CD8-positive, alpha-beta T cell (primary cell): ENCODE measurements at regions of chr5 and their contacts with region 1.

Region 1: DNA sequence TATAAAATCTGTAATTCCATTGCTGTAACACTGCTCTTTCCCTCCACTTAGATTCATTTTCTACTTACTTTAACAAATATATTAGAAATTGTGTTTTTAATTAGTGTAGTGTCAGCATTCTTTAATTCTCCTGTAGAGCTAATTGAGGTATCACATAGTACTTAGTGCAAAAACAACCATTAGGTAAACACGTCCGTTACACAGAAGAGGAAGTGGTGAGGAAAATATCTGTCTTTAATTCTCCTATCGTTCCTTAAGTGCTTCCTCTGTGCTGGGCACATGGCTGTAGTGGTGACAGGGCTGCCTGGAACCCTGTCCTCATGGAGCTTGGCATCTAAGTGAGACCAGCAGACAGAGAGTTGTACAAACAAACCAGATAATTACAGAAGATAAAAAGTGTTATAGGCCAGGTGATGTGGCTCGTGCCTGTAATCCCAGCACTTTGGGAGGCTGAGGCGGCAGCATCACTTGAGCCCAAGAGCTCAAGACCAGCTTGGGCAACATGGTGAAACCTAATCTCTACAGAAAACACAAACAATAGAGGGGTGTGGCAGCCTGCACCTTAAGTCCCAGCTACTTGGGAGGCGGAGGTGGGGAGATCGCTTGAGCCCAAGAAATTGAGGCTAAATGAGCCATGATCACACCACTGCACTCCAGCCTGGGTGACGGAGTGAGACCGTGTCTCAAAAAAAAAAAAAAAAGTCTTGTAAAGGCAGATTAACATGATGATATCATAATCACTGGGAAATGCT is 36.4 kb downstream of the PARP8 start:
- DNase-seq: peak in 1 of 9 experiments; percentile 42
- ATAC-seq: peak; percentile 62
- H3K4me3 ChIP-seq: no peak overlapping the region
- H3K4me3 Mint-ChIP-seq: peak overlapping the region; percentile 59
- H3K27ac ChIP-seq: peak overlapping the region in 1 of 2 experiments; percentile 51
- H3K27ac Mint-ChIP-seq: peak overlapping the region; percentile 95
- H3K4me1 ChIP-seq: peaks cover 55% of the 10 kb centered on the region
- H3K4me1 Mint-ChIP-seq: peaks cover 82% of the 10 kb centered on the region
- H3K27me3 ChIP-seq: no peaks in the 10 kb centered on the region
- H3K27me3 Mint-ChIP-seq: no peaks in the 10 kb centered on the region
- CTCF ChIP-seq: no peak

Region 2: DNA sequence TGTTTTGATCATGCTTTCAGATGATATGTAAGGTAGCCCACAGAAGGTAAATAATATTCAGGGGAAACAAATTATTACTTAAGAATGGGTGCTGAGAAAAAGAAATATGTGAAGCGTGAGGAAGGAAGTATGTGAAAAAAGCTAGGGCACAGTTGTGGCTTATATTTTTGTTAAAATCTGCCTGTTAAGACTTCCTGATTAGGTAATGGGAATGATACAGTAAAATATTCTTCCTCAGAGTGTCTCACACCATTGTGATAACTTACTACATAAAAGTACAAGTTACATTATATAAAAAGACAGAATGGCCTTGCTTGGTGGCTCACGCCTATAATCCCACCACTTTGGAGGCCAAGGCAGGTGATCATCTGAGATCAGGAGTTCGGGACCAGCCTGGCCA is 55.1 kb before region 1 on chr5:
- CTCF ChIA-PET with region 1: no interaction called
- POLR2A ChIA-PET with region 1: no interaction called
- intact Hi-C with region 1: no loop called
- DNase-seq: no peak
- ATAC-seq: no peak
- H3K4me3 ChIP-seq: no peak overlapping the region
- H3K4me3 Mint-ChIP-seq: no peak overlapping the region
- H3K27ac ChIP-seq: no peak overlapping the region
- H3K27ac Mint-ChIP-seq: peak overlapping the region; percentile 5
- H3K4me1 ChIP-seq: peaks cover 12% of the 10 kb centered on the region
- H3K4me1 Mint-ChIP-seq: peaks cover 28% of the 10 kb centered on the region
- H3K27me3 ChIP-seq: no peaks in the 10 kb centered on the region
- H3K27me3 Mint-ChIP-seq: no peaks in the 10 kb centered on the region
- CTCF ChIP-seq: no peak

Region 3: GRCh38 chr5:50691399-50692016 is 11.3 kb before region 1 on chr5:
- CTCF ChIA-PET with region 1: interaction called, 3 read pairs
- POLR2A ChIA-PET with region 1: interaction called, 3 read pairs
- intact Hi-C with region 1: loop called in 1 of 2 experiments (anchors 2 kb)
- DNase-seq: no peak
- ATAC-seq: no peak
- H3K4me3 ChIP-seq: no peak overlapping the region
- H3K4me3 Mint-ChIP-seq: no peak overlapping the region
- H3K27ac ChIP-seq: peak overlapping the region in 1 of 2 experiments; percentile 42
- H3K27ac Mint-ChIP-seq: no peak overlapping the region
- H3K4me1 ChIP-seq: peaks cover 30% of the 10 kb centered on the region
- H3K4me1 Mint-ChIP-seq: peaks cover 43% of the 10 kb centered on the region
- H3K27me3 ChIP-seq: no peaks in the 10 kb centered on the region
- H3K27me3 Mint-ChIP-seq: no peaks in the 10 kb centered on the region
- CTCF ChIP-seq: no peak

Region 4: GRCh38 chr5:50923768-50924494 is 221.1 kb after region 1 on chr5:
- CTCF ChIA-PET with region 1: no interaction called
- POLR2A ChIA-PET with region 1: no interaction called
- intact Hi-C with region 1: no loop called
- DNase-seq: no peak
- ATAC-seq: no peak
- H3K4me3 ChIP-seq: no peak overlapping the region
- H3K4me3 Mint-ChIP-seq: no peak overlapping the region
- H3K27ac ChIP-seq: no peak overlapping the region
- H3K27ac Mint-ChIP-seq: no peak overlapping the region
- H3K4me1 ChIP-seq: no peaks in the 10 kb centered on the region
- H3K4me1 Mint-ChIP-seq: no peaks in the 10 kb centered on the region
- H3K27me3 ChIP-seq: peaks cover 0 to 3% of the 10 kb centered on the region in 2 experiments
- H3K27me3 Mint-ChIP-seq: peaks cover 11% of the 10 kb centered on the region
- CTCF ChIP-seq: no peak